Activated T-helper 2 cell treated with anti-CD3 and anti-CD28 coated beads, Interferon-gamma antibody, Interleukin-2, Interleukin-4, amounts not matched to agents 10 μg/mL and 5 μg/mL and 100 μg/mL, durations not matched to agents 14 hours and 24 hours and 36 hours (primary cell): ENCODE measurements at regions of chr5 and their contacts with region 1.

Region 1: DNA sequence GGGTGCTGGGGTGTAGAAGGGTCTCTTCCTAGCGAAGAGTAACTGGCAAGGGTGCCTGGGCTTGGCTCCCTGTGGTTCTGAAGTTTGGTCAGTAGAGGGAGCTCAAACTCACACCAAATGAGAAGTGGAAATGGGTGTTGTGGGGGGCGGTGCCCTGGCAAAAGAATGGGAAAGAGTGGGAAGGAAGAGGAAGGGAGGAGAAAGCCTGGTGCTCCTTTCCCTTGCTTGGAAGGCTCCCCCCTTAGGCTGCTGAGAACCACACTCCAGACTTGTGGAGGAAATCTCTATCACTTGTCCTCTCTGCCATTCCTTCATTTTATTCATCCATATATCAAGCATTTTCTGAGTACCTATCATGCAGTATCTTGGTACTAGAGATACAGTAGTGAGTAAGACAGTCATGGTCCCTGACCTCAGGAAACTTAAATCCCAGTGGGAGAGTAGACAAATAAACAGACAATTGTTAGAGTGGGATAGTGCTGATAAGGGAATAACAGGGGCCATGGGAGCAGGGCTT is 13.0 kb downstream of the SLC4A9 start:
- DNase-seq: no peak
- H3K4me3 Mint-ChIP-seq: no peak overlapping the region
- H3K27ac Mint-ChIP-seq: no peak overlapping the region
- H3K4me1 Mint-ChIP-seq: peaks cover 5% of the 10 kb centered on the region
- H3K27me3 Mint-ChIP-seq: no peaks in the 10 kb centered on the region

Region 2: DNA sequence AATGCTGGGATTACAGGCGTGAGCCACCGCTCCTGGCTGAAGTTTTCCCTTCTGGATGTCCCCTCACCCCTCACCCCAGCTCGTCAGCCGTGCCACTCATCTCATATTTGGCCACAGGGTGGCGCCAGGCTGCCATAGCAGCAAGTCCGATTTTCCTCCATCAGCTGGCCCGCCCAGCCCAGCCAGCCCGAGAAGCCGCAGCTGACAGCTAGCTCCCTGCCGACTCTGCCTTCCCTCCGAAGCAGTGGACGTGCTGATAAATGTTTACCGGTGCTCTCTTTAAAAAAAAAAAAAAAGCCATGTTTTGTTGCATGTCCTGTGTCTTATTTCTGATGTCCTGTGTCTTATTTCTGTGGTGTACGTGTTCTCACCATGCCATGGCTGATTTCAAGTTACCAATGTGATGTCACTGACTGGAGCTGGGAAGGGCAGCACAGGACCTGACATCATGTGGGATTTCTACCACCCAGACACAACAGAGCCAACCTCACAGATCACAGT is 128.5 kb before region 1 on chr5:
- intact Hi-C with region 1: no loop called
- DNase-seq: peak; percentile 66
- H3K4me3 Mint-ChIP-seq: no peak overlapping the region
- H3K27ac Mint-ChIP-seq: no peak overlapping the region
- H3K4me1 Mint-ChIP-seq: peaks cover 18% of the 10 kb centered on the region
- H3K27me3 Mint-ChIP-seq: no peaks in the 10 kb centered on the region

Region 3: GRCh38 chr5:140725799-140726471 is 352.9 kb after region 1 on chr5:
- intact Hi-C with region 1: loop called (anchors 5 kb)
- DNase-seq: peak; percentile 75
- H3K4me3 Mint-ChIP-seq: peak overlapping the region; percentile 76
- H3K27ac Mint-ChIP-seq: peak overlapping the region; percentile 61
- H3K4me1 Mint-ChIP-seq: peaks cover 5% of the 10 kb centered on the region
- H3K27me3 Mint-ChIP-seq: peaks cover 10% of the 10 kb centered on the region